HepG2 (cell line): ENCODE measurements at regions of chr15 and their contacts with region 1.

Region 1: GRCh38 chr15:45402162-45402954 is 24.0 kb upstream of the GATM start:
- DNase-seq: peak; percentile 97
- ATAC-seq: peak; percentile 94
- H3K4me3 ChIP-seq: peak overlapping the region; percentile 92 to 99 (median 95)
- H3K27ac ChIP-seq: peak overlapping the region; percentile 88
- H3K4me1 ChIP-seq: peaks cover 58% of the 10 kb centered on the region
- H3K27me3 ChIP-seq: no peaks in the 10 kb centered on the region; a peak in 1 of 5 replicates
- CTCF ChIP-seq: no peak
- EP300 ChIP-seq: no peak
- POLR2A ChIP-seq: peak; percentile 68 to 94
- RAD21 ChIP-seq: no peak

Region 2: DNA sequence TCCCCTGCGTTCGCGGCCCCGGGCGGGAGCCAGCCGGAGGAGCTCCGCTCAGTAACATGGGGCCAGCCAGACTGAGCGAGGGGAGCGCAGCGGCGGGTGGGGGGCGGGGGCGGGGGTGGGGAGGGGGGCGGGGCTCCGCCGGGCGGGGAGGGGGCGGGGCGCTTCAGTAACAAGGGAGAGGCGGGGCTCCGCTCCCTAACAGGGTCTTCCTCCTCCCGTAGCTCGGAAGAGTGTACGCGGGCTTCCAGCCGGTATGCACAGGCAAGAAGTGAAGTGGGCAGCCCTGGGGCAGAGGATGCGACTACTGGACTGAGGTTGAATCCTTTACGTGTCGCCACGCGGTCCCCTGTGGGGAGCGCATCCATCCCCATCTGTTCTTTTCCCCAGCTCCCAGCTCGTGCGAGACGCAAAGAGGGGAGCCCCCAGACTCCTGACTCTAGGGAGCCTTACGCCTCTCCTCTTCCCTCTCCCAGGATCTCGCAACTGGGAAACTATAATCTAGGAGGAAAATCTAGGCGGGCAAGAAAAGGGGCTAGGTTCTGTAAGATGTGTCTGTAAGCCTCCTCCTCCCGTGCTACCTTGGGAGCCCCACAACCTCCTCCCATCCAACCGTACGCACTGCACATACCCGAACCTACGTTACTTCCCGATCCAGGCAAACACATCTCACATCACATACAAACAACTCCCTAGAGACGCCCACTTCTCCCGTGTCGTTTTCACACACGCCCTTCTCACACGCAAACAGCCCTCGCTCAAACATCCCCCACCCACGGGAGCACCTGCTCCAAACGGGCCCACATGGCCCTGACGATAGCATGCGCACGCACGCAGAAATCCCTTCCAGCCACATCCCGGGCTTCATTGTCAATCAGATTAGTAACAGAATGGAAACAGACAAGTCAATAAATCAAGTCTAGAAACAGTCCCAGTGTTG is 214.2 kb before region 1 on chr15 and contains the start of gene SHF:
- CTCF ChIA-PET with region 1: no interaction called
- POLR2A ChIA-PET with region 1: interaction called, 12 read pairs
- in situ Hi-C with region 1: no loop called
- intact Hi-C with region 1: no loop called
- DNase-seq: peak; percentile 31
- ATAC-seq: peak; percentile 69
- H3K4me3 ChIP-seq: peak within 1 kb of the TSS; percentile 79 to 83 (median 82)
- H3K27ac ChIP-seq: peak within 1 kb of the TSS; percentile 50
- H3K4me1 ChIP-seq: peaks cover 45% of the 10 kb centered on the region
- H3K27me3 ChIP-seq: peaks cover 0 to 3% of the 10 kb centered on the region in 2 experiments; a peak in 1 of 5 replicates
- CTCF ChIP-seq: no peak
- EP300 ChIP-seq: no peak
- POLR2A ChIP-seq: peak in 1 of 2 experiments; percentile 65; a peak in 1 of 4 replicates
- RAD21 ChIP-seq: no peak
- total RNA-seq, gene SHF: 16.8 and 25.5 TPM in 2 replicates

Region 3: DNA sequence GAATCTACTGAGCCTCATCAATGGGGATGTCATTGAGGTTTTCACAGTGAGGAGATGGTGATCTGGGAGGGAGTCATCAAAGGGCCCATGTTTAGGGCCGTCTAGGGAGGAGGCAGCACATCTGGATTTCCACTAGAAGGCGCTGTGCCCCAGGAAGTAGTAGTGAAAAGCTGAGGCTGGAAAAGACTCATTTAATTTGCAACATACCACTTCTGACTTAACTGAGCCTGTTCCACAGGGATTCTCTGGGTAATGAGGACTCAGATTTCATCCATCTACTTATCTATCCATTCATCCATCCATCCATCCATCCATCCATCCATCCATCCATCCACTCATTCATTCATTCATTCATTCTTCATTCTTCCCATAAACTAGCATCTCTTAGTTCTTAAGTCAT is 197.2 kb before region 1 on chr15:
- CTCF ChIA-PET with region 1: interaction called, 9 read pairs
- POLR2A ChIA-PET with region 1: interaction called, 25 read pairs
- in situ Hi-C with region 1: loop called (anchors 10 kb)
- intact Hi-C with region 1: loop called (anchors 1 kb)
- DNase-seq: peak; percentile 67
- ATAC-seq: peak; percentile 46
- H3K4me3 ChIP-seq: no peak overlapping the region
- H3K27ac ChIP-seq: no peak overlapping the region
- H3K4me1 ChIP-seq: peaks cover 34% of the 10 kb centered on the region
- H3K27me3 ChIP-seq: no peaks in the 10 kb centered on the region; a peak in 2 of 5 replicates
- CTCF ChIP-seq: peak; percentile 85
- EP300 ChIP-seq: no peak
- POLR2A ChIP-seq: no peak
- RAD21 ChIP-seq: peak; percentile 77

Region 4: GRCh38 chr15:45307230-45307924 is 95.0 kb before region 1 on chr15:
- CTCF ChIA-PET with region 1: interaction called, 23 read pairs
- POLR2A ChIA-PET with region 1: interaction called, 8 read pairs
- in situ Hi-C with region 1: loop called (anchors 5 kb)
- intact Hi-C with region 1: loop called (anchors 1 kb)
- DNase-seq: peak; percentile 53
- ATAC-seq: peak; percentile 51
- H3K4me3 ChIP-seq: peak overlapping the region; percentile 25 to 36 (median 26); a peak in 4 of 6 replicates
- H3K27ac ChIP-seq: peak overlapping the region; percentile 53
- H3K4me1 ChIP-seq: peaks cover 61% of the 10 kb centered on the region
- H3K27me3 ChIP-seq: no peaks in the 10 kb centered on the region
- CTCF ChIP-seq: peak; percentile 66
- EP300 ChIP-seq: no peak
- POLR2A ChIP-seq: no peak
- RAD21 ChIP-seq: peak; percentile 65

Region 5: DNA sequence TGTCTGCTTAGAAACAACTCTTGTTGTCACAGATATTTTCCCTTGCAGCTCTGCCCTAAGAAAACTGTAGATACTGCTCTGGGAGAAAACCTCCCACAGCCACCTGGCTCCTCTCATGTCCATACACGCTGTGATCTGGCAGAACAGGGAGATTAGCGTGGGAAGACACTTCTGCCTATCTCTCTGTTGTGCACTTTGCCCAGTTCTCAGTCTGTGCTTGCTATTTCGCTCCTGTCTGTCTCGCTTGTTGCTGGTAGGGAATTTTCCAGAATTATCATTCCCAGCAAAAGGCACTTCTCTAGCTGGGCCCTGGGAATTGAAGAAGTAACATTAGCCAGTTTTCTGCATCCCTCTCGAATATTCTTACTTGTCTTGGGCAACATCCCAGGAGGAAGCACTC is 15.9 kb before region 1 on chr15:
- CTCF ChIA-PET with region 1: no interaction called
- POLR2A ChIA-PET with region 1: interaction called, 10 read pairs
- in situ Hi-C with region 1: no loop called
- intact Hi-C with region 1: no loop called
- DNase-seq: peak; percentile 47
- ATAC-seq: peak; percentile 65
- H3K4me3 ChIP-seq: no peak overlapping the region
- H3K27ac ChIP-seq: peak overlapping the region; percentile 69
- H3K4me1 ChIP-seq: peaks cover 76% of the 10 kb centered on the region
- H3K27me3 ChIP-seq: no peaks in the 10 kb centered on the region; a peak in 1 of 5 replicates
- CTCF ChIP-seq: no peak
- EP300 ChIP-seq: no peak; a peak in 1 of 4 replicates
- POLR2A ChIP-seq: no peak
- RAD21 ChIP-seq: no peak